Dorsolateral prefrontal cortex (tissue), 120 donors: ENCODE measurements at regions of chr1 and their contacts with region 1.

Region 1: GRCh38 chr1:14598497-14599172 is at the start of gene KAZN:
- DNase-seq: peak in 8 of 10 donors; percentile 31 to 76 (median 57)
- H3K4me3 ChIP-seq: peak within 1 kb of the TSS; percentile 52 to 85 (median 74)
- H3K27ac ChIP-seq: peak within 1 kb of the TSS in 45 of 59 donors; percentile 6 to 88 (median 61)
- H3K27me3 ChIP-seq: peaks cover 0 to 8% (median 0%) of the 10 kb centered on the region in 45 donors
- CTCF ChIP-seq: peak in 1 of 56 donors; percentile 13
- total RNA-seq, gene KAZN: 51.1 to 93.6 (median 76.3) TPM

Region 2: GRCh38 chr1:14259191-14259757 is 339.4 kb before region 1 on chr1:
- intact Hi-C with region 1: loop called in 1 of 2 experiments (anchors 10 kb)
- DNase-seq: peak; percentile 69 to 97 (median 92)
- H3K4me3 ChIP-seq: peak overlapping the region in 9 of 59 donors; percentile 0 to 27 (median 10)
- H3K27ac ChIP-seq: peak overlapping the region; percentile 61 to 100 (median 96)
- H3K27me3 ChIP-seq: no peaks in the 10 kb centered on the region
- CTCF ChIP-seq: peak in 7 of 56 donors; percentile 3 to 35 (median 18)

Region 3: DNA sequence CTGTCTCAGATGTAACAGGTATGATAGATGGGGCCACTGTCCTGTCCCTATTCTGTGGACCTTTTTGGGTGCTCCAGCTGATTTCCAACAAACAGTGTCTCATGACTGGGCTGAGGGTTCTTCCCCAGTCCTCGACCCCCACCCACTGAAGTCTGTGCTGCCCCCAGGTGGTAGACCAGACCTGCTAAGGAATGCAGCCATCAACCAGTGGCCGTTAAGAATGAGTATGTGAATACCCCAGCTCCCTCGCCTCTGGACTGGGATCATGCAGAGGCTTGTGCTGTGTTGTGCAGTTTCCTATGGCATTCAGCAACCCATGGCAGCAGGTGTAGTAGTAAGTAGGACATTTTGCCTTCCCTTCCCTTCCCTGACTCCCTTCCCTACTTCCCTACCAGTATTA is 183.2 kb before region 1 on chr1:
- intact Hi-C with region 1: loop called in 1 of 2 experiments (anchors 10 kb)
- DNase-seq: no peak
- H3K4me3 ChIP-seq: no peak overlapping the region
- H3K27ac ChIP-seq: peak overlapping the region in 1 of 59 donors; percentile 27
- H3K27me3 ChIP-seq: no peaks in the 10 kb centered on the region
- CTCF ChIP-seq: peak in 8 of 56 donors; percentile 5 to 15 (median 11)

Region 4: GRCh38 chr1:14733048-14733778 is 134.6 kb after region 1 on chr1:
- intact Hi-C with region 1: loop called in 1 of 2 experiments (anchors 10 kb)
- DNase-seq: no peak
- H3K4me3 ChIP-seq: no peak overlapping the region
- H3K27ac ChIP-seq: no peak overlapping the region
- H3K27me3 ChIP-seq: peaks cover 0 to 5% (median 0%) of the 10 kb centered on the region in 45 donors
- CTCF ChIP-seq: no peak